ENCODE measurements at regions of chr7 and their contacts with region 1.

Region 1: DNA sequence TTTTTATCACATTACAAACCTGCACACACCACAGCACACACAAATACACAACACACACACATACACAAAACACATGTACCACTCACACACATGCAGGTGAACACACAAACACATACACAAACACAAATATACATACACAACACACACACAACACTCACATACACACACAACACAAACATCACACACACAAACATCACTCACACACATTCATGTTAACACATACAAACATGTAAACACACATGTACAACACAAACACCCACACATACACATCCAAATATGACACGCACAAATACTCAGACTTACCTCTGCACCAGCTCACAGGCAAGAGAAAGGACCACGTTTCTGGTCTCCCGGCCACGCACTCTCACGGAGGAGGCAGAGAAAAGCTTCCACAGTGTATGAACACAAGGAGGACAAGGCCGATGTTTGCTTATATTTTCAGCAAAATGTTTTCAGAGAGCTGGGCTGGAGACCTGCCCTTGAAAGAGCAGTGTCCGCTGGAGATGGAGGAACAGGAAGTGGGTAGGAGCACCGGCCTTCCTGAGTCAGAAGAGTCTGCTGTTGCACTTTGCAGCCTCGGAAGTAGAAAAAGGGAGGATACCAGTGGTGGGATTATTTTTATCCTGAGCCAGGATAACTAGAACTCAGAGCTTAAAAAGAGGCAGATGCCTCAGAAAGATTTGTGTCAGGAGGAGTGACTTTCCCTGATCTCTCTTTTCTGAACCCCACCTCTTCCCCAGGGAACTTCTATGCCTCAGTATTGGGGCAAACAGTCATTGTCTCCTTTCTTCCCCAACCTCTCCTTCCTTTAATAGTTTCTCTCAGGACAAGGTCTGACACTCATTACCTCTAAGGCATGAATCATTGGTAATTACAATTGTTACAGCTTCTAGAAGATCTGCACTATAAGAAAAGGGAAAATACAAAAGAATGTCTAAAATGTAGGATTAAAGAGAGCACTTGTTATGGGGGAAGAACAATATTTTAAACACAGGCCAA is at the start of gene GIMAP6:
- DNase-seq: peak; percentile 48
- H3K4me3 Mint-ChIP-seq: peak within 1 kb of the TSS; percentile 94
- H3K27ac Mint-ChIP-seq: peak within 1 kb of the TSS; percentile 94
- H3K4me1 Mint-ChIP-seq: peaks cover 68% of the 10 kb centered on the region
- H3K27me3 Mint-ChIP-seq: no peaks in the 10 kb centered on the region
- total RNA-seq, gene GIMAP6: 38.7 and 41.3 TPM in 2 replicates

Region 2: GRCh38 chr7:150520145-150520544 is 112.0 kb before region 1 on chr7:
- intact Hi-C with region 1: loop called (anchors 2 kb)
- DNase-seq: peak; percentile 43
- H3K4me3 Mint-ChIP-seq: peak overlapping the region; percentile 96
- H3K27ac Mint-ChIP-seq: peak overlapping the region; percentile 93
- H3K4me1 Mint-ChIP-seq: peaks cover 65% of the 10 kb centered on the region
- H3K27me3 Mint-ChIP-seq: no peaks in the 10 kb centered on the region

Region 3: GRCh38 chr7:150556521-150557138 is 75.5 kb before region 1 on chr7:
- intact Hi-C with region 1: no loop called
- DNase-seq: peak; percentile 48
- H3K4me3 Mint-ChIP-seq: peak overlapping the region; percentile 64
- H3K27ac Mint-ChIP-seq: peak overlapping the region; percentile 90
- H3K4me1 Mint-ChIP-seq: peaks cover 82% of the 10 kb centered on the region
- H3K27me3 Mint-ChIP-seq: no peaks in the 10 kb centered on the region

Region 4: DNA sequence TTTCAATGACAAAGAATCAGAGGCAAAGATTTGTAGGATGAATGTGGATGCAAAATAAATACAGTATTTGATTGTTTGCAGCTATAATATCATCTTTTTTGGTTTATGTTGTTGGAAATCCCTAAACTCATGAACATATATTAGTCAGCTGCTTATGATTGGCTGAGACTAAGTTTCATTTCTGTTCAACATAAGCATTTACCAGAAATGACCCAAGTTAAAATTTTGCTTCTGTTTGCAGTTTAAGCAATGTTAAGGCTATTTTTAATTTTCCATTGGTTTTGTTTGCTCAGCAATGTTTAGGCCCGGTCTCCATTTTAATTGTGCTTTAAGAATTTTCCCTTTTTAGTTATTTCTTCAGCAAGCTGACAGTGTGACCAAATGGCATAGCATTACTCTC is 21.9 kb before region 1 on chr7:
- intact Hi-C with region 1: loop called (anchors 2 kb)
- DNase-seq: no peak
- H3K4me3 Mint-ChIP-seq: peak overlapping the region; percentile 2
- H3K27ac Mint-ChIP-seq: peak overlapping the region; percentile 90
- H3K4me1 Mint-ChIP-seq: peaks cover 59% of the 10 kb centered on the region
- H3K27me3 Mint-ChIP-seq: no peaks in the 10 kb centered on the region

Region 5: GRCh38 chr7:150620617-150621371 is 11.4 kb before region 1 on chr7:
- intact Hi-C with region 1: loop called (anchors 1 kb)
- DNase-seq: no peak
- H3K4me3 Mint-ChIP-seq: peak overlapping the region; percentile 57
- H3K27ac Mint-ChIP-seq: peak overlapping the region; percentile 86
- H3K4me1 Mint-ChIP-seq: peaks cover 63% of the 10 kb centered on the region
- H3K27me3 Mint-ChIP-seq: no peaks in the 10 kb centered on the region

Region 6: GRCh38 chr7:150716368-150716767 is 84.2 kb after region 1 on chr7 and contains the start of gene GIMAP1:
- intact Hi-C with region 1: loop called (anchors 1 kb)
- DNase-seq: peak; percentile 58
- H3K4me3 Mint-ChIP-seq: peak within 1 kb of the TSS; percentile 97
- H3K27ac Mint-ChIP-seq: peak within 1 kb of the TSS; percentile 75
- H3K4me1 Mint-ChIP-seq: peaks cover 64% of the 10 kb centered on the region
- H3K27me3 Mint-ChIP-seq: no peaks in the 10 kb centered on the region
- total RNA-seq, gene GIMAP1: 4.6 and 4.9 TPM in 2 replicates